Activated naive CD4-positive, alpha-beta T cell treated with anti-CD3 and anti-CD28 coated beads for 36 hours (primary cell): ENCODE measurements at regions of chr3 and their contacts with region 1.

Region 1: GRCh38 chr3:182967218-182968204 is 12.8 kb downstream of the DCUN1D1 start:
- DNase-seq: peak; percentile 41
- H3K4me3 Mint-ChIP-seq: no peak overlapping the region
- H3K27ac Mint-ChIP-seq: peak overlapping the region; percentile 85
- H3K4me1 Mint-ChIP-seq: peaks cover 59% of the 10 kb centered on the region
- H3K27me3 Mint-ChIP-seq: no peaks in the 10 kb centered on the region

Region 2: GRCh38 chr3:182909318-182910040 is 58.0 kb before region 1 on chr3:
- CTCF ChIA-PET with region 1: interaction called, 4 read pairs
- intact Hi-C with region 1: loop called (anchors 5 kb)
- DNase-seq: no peak
- H3K4me3 Mint-ChIP-seq: no peak overlapping the region
- H3K27ac Mint-ChIP-seq: peak overlapping the region; percentile 54
- H3K4me1 Mint-ChIP-seq: peaks cover 45% of the 10 kb centered on the region
- H3K27me3 Mint-ChIP-seq: no peaks in the 10 kb centered on the region

Region 3: DNA sequence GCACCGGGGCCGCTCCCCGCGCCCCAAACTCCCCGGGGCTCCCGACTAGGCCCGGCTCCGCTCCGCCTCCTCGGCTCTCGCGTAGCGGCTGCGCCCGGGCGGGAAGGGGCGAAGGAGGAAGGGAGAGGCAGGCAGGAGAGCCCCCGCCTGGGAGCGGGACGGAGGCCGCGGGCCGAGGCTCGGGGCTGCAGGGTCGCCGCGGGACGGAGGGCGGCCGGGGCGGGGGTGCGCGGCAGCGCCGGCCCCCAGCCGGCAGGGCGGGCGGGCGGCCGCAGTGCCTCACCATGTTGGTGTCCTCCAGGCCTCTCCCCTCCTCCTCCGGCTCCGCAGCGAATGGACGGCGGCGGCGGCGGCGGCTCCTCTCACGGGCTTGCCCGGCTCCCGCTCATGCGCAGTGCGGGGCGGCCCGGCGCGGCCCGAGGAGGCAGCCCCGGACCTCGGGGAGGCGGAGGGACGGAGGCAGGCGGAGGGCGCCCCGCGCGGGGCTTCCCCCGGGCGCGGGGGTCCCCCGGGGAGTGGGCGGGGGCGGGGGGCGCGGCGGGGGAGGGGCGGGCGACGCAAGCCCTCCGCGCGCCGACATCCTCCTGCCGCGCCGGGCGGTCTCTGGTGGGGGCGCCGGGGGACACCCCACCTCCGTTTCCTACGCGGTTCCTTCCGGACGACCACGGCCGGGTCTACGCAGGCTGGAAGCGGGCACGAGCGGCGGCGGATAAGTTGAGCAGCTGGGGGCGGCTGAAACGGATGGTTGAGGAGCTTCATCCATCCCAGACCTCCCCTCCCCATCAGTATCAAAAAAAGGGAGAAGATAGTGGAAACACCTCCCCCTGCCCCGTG is 12.9 kb after region 1 on chr3 and contains the start of gene DCUN1D1:
- CTCF ChIA-PET with region 1: interaction called, 4 read pairs
- intact Hi-C with region 1: loop called (anchors 1 kb)
- DNase-seq: peak; percentile 88
- H3K4me3 Mint-ChIP-seq: peak within 1 kb of the TSS; percentile 88
- H3K27ac Mint-ChIP-seq: peak within 1 kb of the TSS; percentile 83
- H3K4me1 Mint-ChIP-seq: peaks cover 20% of the 10 kb centered on the region
- H3K27me3 Mint-ChIP-seq: no peaks in the 10 kb centered on the region
- total RNA-seq, gene DCUN1D1: 38.4 to 40.5 TPM

Region 4: GRCh38 chr3:183099026-183099837 is 131.7 kb after region 1 on chr3 and contains the start of gene MCCC1:
- CTCF ChIA-PET with region 1: no interaction called
- intact Hi-C with region 1: loop called (anchors 1 kb)
- DNase-seq: peak; percentile 99
- H3K4me3 Mint-ChIP-seq: peak within 1 kb of the TSS; percentile 97
- H3K27ac Mint-ChIP-seq: peak within 1 kb of the TSS; percentile 91
- H3K4me1 Mint-ChIP-seq: peaks cover 33% of the 10 kb centered on the region
- H3K27me3 Mint-ChIP-seq: no peaks in the 10 kb centered on the region
- total RNA-seq, gene MCCC1: 21.0 to 24.9 TPM

Region 5: DNA sequence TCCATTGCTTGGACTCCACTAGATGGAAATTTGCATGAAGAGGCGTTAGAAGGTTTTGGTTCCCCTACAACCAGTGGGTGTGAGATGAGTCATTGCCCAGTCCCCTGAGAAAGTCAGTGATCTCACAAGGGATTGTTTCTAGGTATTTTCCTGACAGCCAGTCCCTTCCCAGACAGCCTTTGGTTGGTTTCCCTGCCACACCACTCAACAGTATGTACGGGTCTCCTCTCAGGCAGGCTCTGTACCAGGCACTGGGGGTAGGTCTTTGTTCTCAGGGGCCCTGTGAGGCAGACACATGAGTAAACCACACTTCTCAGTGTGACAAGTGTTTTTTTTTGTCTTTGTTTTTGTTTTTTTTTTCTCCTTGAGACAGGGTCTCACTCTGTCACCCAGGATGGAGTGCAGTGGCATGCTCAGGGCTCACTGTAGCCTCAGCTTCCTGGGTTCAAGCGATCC is 191.1 kb after region 1 on chr3:
- CTCF ChIA-PET with region 1: no interaction called
- intact Hi-C with region 1: loop called (anchors 2 kb)
- DNase-seq: peak; percentile 80
- H3K4me3 Mint-ChIP-seq: peak overlapping the region; percentile 19
- H3K27ac Mint-ChIP-seq: peak overlapping the region; percentile 74
- H3K4me1 Mint-ChIP-seq: peaks cover 41% of the 10 kb centered on the region
- H3K27me3 Mint-ChIP-seq: no peaks in the 10 kb centered on the region

Region 6: GRCh38 chr3:183265834-183266417 is 298.4 kb after region 1 on chr3:
- CTCF ChIA-PET with region 1: no interaction called
- intact Hi-C with region 1: loop called (anchors 1 kb)
- DNase-seq: peak; percentile 80
- H3K4me3 Mint-ChIP-seq: no peak overlapping the region
- H3K27ac Mint-ChIP-seq: no peak overlapping the region
- H3K4me1 Mint-ChIP-seq: peaks cover 6% of the 10 kb centered on the region
- H3K27me3 Mint-ChIP-seq: no peaks in the 10 kb centered on the region

Region 7: GRCh38 chr3:183377307-183377959 is 409.9 kb after region 1 on chr3:
- CTCF ChIA-PET with region 1: no interaction called
- intact Hi-C with region 1: loop called (anchors 10 kb)
- DNase-seq: no peak
- H3K4me3 Mint-ChIP-seq: no peak overlapping the region
- H3K27ac Mint-ChIP-seq: no peak overlapping the region
- H3K4me1 Mint-ChIP-seq: peaks cover 21% of the 10 kb centered on the region
- H3K27me3 Mint-ChIP-seq: no peaks in the 10 kb centered on the region